ENCODE measurements at regions of chr2 and their contacts with region 1.

Region 1: DNA sequence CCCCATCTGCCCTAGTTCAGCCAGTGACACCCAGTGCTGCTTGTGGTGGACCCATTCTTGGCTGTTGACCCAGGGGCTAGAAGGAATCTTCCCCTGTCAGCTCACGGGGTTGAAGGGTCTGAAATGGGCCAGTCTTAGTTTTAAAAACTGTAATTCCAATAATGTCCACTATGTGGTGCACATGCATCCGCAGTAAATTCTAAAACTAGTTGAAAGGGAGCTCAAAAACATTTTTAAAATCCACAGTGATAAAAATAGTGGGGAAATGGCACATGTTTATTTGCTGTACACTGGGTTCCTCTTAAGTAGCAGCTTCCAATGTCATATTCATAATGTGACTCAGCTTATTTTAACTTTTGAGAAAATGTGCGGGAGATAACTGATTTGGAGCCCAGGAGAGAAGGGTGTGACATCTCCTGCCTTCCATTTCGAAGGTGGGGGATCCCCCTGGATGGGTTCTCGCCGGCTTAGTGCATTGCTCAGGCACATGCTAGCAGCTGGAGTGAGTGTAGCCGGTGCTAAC is 32.8 kb downstream of the GRHL1 start:
- DNase-seq: no peak
- ATAC-seq: peak; percentile 90
- H3K4me3 Mint-ChIP-seq: no peak overlapping the region
- H3K27ac Mint-ChIP-seq: no peak overlapping the region
- H3K4me1 Mint-ChIP-seq: no peaks in the 10 kb centered on the region
- H3K27me3 Mint-ChIP-seq: no peaks in the 10 kb centered on the region
- CTCF ChIP-seq: peak; percentile 60

Region 2: GRCh38 chr2:9813312-9814133 is 170.8 kb before region 1 on chr2:
- CTCF ChIA-PET with region 1: interaction called, 11 read pairs
- POLR2A ChIA-PET with region 1: no interaction called
- DNase-seq: peak; percentile 94
- ATAC-seq: peak; percentile 95
- H3K4me3 Mint-ChIP-seq: peak overlapping the region; percentile 31; the same call in 1 of the 2 replicates
- H3K27ac Mint-ChIP-seq: no peak overlapping the region
- H3K4me1 Mint-ChIP-seq: peaks cover 6% of the 10 kb centered on the region
- H3K27me3 Mint-ChIP-seq: 0 out of 2 replicates have a peak, but pooled peaks cover 4% of the 10 kb centered on the region
- CTCF ChIP-seq: peak; percentile 79

Region 3: DNA sequence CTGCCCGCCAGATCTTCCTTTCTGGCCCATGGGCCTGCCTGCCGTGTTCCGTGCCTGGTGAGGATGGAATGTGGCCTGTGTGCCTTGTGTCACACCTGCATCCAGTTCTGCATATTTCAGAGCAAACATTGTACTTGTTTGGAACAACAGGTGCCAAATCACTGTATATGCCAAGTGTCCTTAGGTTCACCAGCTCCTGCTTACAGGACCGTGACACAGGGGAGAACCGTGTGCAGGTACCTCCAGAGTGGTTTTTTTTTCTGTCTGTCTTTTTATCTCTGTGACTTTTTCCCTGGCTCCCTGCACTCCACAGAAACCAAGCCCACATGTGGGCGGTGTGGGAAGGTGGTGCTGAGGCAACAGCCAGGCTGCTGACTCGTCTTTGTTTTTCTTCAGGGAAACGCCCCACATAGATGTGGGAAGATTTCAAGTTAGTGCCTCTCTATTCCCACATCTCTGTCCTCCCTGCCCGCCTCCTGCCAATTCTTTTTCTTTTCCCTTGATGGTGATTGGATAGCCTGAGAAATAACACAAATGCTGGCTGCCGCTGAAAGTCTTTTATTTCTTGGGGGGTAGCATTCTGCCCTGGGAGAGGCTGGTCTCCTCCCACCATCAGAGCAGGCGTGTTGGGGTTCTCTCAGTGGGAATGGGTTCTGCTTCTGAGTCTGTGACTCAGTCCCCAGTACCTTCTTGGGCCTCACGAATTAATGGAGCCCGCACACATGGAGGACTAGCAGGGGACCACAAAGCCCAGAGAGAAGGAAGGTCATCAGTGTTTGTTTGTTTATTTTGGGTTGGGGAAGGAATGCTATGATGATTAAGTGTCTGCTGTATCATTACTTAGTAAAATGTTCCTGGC is 11.4 kb before region 1 on chr2:
- CTCF ChIA-PET with region 1: interaction called, 50 read pairs
- POLR2A ChIA-PET with region 1: no interaction called
- DNase-seq: no peak
- ATAC-seq: no peak
- H3K4me3 Mint-ChIP-seq: no peak overlapping the region
- H3K27ac Mint-ChIP-seq: peak overlapping the region; percentile 38
- H3K4me1 Mint-ChIP-seq: peaks cover 5% of the 10 kb centered on the region; the same call in 1 of the 2 replicates
- H3K27me3 Mint-ChIP-seq: no peaks in the 10 kb centered on the region
- CTCF ChIP-seq: no peak

Region 4: DNA sequence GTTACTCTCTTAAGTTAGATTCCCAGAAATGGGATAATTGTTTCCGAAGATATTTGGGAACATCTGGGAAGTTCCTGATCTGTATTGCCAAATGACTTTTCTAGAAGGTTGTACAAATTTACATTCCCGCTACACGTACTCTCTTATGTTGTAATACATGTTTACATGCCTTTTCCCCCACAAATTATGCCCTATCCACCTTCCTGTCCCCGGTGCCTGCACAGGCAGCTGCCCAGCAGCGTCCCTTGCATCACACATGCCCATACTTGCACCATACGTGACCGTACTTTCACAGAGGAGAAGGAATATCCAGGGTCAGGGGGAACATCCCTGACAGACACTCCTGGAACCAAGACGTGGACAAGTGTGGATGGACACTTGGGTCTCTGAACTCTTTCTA is 34.9 kb after region 1 on chr2:
- CTCF ChIA-PET with region 1: interaction called, 14 read pairs
- POLR2A ChIA-PET with region 1: interaction called, 3 read pairs
- DNase-seq: no peak
- ATAC-seq: no peak
- H3K4me3 Mint-ChIP-seq: no peak overlapping the region
- H3K27ac Mint-ChIP-seq: no peak overlapping the region; the same call in 1 of the 2 replicates
- H3K4me1 Mint-ChIP-seq: no peaks in the 10 kb centered on the region
- H3K27me3 Mint-ChIP-seq: no peaks in the 10 kb centered on the region; the same call in 1 of the 2 replicates
- CTCF ChIP-seq: no peak

Region 5: GRCh38 chr2:10036095-10036884 is 52.0 kb after region 1 on chr2:
- CTCF ChIA-PET with region 1: interaction called, 23 read pairs
- POLR2A ChIA-PET with region 1: no interaction called
- DNase-seq: no peak
- ATAC-seq: peak; percentile 84
- H3K4me3 Mint-ChIP-seq: no peak overlapping the region
- H3K27ac Mint-ChIP-seq: no peak overlapping the region
- H3K4me1 Mint-ChIP-seq: no peaks in the 10 kb centered on the region
- H3K27me3 Mint-ChIP-seq: peaks cover 10% of the 10 kb centered on the region
- CTCF ChIP-seq: no peak

Region 6: DNA sequence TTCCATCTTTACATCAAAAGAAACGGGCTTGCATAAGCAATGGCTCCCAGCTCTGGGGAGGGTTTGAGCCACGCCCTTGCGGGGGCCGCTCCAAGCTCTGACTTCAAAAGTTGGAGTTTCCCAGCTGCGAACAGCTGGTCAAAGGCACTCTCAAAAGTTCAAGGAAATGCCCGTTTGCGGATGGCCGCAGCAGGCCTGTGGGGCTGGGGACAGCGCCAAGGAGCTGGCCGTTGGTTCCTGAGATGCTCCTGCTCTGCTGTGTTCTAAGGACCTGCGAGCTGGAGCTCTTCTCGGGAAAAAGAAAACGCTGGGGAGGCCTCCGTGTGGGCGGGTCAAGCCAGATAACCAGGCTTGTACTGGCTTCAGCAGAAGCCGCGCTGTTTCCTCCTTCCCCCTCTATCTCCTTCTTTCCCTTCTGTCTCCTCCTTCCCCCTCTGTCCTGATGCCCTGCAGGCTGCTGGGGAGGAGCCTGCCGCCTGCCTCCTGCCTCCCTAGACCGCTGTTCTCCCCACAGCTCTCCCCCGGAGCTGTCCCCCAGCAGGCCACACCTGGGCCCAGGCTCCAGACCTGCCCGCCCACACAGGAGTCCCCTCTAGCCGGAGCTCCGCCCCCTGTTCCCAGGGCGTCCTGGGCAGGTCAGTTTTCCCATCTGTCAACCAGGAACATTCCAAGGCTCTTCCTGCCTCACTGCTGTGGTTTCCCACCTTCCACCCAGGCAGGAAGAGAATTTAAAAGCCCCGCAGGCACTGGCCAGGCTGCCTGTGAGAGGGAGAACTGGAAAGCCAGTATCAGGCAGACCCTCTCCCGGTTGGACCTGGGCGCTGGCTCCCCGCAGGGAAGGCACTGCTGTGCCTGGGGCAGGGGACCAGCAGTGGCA is 73.2 kb after region 1 on chr2:
- CTCF ChIA-PET with region 1: interaction called, 27 read pairs
- POLR2A ChIA-PET with region 1: no interaction called
- DNase-seq: peak; percentile 92
- ATAC-seq: peak; percentile 94
- H3K4me3 Mint-ChIP-seq: peak overlapping the region; percentile 85
- H3K27ac Mint-ChIP-seq: peak overlapping the region; percentile 98
- H3K4me1 Mint-ChIP-seq: peaks cover 28% of the 10 kb centered on the region
- H3K27me3 Mint-ChIP-seq: no peaks in the 10 kb centered on the region
- CTCF ChIP-seq: no peak

Region 7: DNA sequence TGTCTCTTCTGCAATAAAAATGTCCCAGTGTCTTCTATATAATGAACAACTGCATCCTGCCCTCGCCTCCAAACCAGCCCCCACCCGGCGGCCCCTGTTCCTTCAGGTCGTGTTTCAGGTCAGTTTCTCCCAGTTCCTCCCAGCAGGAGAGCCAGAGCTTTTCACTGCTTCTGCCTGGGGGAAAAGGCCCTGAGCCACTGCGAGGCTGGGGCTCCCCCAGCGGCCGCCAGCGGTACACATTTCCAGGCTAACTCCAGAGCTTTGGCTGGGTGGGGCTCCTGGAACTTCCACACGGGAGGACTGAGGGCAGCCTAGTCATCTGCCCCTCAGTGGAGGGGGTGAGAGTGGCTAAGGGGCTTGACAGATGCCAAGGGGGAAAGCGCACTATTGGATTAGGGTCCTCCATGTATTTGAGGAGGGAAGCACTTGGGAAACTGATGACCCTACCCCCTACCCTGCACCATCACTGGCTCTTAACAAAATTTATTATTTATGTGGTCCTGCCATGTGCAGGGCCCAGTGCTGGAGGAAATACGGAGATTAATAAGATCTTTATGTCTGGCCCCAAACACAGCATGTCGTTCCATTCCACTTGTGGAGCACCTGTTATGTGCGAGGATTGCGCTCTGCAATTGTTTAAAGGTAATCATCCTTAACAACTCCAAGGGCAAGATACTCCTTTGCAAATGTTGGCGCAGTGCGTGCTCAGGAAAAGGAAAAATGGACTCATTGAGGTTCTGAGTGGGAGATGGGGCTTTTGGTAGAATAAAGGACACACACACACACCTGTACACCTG is 113.3 kb after region 1 on chr2:
- CTCF ChIA-PET with region 1: interaction called, 28 read pairs
- POLR2A ChIA-PET with region 1: no interaction called
- DNase-seq: peak; percentile 82
- ATAC-seq: peak; percentile 96
- H3K4me3 Mint-ChIP-seq: no peak overlapping the region
- H3K27ac Mint-ChIP-seq: no peak overlapping the region
- H3K4me1 Mint-ChIP-seq: peaks cover 31% of the 10 kb centered on the region
- H3K27me3 Mint-ChIP-seq: peaks cover under 1% of the 10 kb centered on the region; the same call in 1 of the 2 replicates
- CTCF ChIP-seq: peak; percentile 85; the same call in 1 of the 2 replicates